T-cell (primary cell): ENCODE measurements at regions of chr11 and their contacts with region 1.

Region 1: GRCh38 chr11:27485930-27486773 is 13.6 kb upstream of the LGR4 start:
- DNase-seq: peak in 11 of 35 experiments; percentile 11 to 73 (median 26)
- ATAC-seq: peak in 2 of 4 experiments; percentile 46 to 51
- H3K4me3 ChIP-seq: no peak overlapping the region
- H3K4me3 Mint-ChIP-seq: no peak overlapping the region
- H3K27ac ChIP-seq: no peak overlapping the region
- H3K27ac Mint-ChIP-seq: no peak overlapping the region
- H3K4me1 ChIP-seq: no peaks in the 10 kb centered on the region
- H3K4me1 Mint-ChIP-seq: no peaks in the 10 kb centered on the region
- H3K27me3 ChIP-seq: no peaks in the 10 kb centered on the region
- H3K27me3 Mint-ChIP-seq: no peaks in the 10 kb centered on the region

Region 2: DNA sequence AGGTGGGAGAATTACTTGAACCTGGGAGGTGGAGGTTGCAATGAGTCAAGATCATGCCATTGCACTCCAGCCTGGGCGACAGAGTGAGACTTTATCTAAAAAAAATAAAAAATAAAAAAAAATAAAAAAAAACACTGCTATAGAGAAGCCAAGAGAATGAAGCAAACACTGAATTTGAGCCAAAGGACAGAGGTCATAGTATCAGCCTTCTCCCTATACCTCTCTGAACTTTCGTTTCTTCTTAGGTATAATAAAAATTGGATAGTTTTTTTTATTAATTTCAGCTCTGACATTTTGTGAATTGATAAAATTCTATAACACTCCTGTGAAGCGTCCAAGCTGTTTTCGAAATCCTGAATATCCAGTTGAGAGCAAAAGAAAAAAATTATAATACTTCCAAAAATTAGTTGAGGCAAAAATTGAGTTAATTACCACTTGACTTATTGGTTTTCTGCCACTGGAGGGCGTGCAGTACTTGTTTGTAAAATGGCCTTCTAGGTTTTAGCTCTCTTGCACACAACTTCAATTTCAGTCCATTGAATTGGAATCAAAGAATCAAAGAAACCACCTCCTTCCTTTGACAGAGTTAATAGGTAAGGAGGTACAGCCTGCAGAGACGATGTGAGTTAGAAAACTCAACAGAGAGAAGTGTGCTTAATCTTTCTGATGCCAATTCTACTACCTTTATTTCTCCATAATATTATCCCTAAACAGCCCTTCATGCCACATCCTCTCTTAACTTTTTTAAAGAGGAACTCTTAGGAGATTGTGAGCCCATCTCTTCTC is 302.3 kb before region 1 on chr11:
- CTCF ChIA-PET with region 1: interaction called, 4 to 34 read pairs
- POLR2A ChIA-PET with region 1: no interaction called
- DNase-seq: peak in 28 of 35 experiments; percentile 1 to 60 (median 17)
- ATAC-seq: peak in 1 of 4 experiments; percentile 32
- H3K4me3 ChIP-seq: no peak overlapping the region
- H3K4me3 Mint-ChIP-seq: no peak overlapping the region
- H3K27ac ChIP-seq: no peak overlapping the region
- H3K27ac Mint-ChIP-seq: no peak overlapping the region
- H3K4me1 ChIP-seq: no peaks in the 10 kb centered on the region
- H3K4me1 Mint-ChIP-seq: no peaks in the 10 kb centered on the region
- H3K27me3 ChIP-seq: no peaks in the 10 kb centered on the region
- H3K27me3 Mint-ChIP-seq: peaks cover 16% of the 10 kb centered on the region in 2 donors

Region 3: DNA sequence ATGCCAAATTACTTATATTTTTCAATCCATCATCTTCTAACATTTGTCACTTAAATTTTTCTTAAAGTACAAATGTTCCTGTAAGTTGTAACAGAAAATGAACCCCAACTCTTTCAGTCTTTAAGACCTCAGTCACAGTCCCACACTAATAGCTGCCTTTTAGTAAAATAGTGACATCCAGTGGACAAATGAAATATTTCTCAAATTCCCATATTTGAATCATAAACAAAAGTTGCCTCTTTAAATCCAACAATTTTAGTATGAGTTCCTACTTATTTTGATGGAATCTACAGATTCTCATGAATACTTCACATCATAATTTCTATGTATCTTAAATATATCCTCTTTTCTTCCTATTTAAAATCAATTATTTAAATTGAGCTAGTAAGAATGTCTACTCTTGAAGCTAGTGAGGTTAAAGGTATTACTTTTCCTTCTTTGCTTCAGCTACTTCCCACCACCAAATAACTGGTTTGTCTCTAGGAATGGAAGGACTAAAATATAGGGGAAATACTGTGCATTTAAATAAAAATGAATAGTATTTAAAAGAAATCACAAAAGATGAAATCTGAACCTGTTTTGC is 11.2 kb after region 1 on chr11:
- CTCF ChIA-PET with region 1: interaction called, 45 to 82 read pairs
- POLR2A ChIA-PET with region 1: no interaction called
- DNase-seq: peak in 1 of 35 experiments; percentile 41
- ATAC-seq: peak in 1 of 4 experiments; percentile 41
- H3K4me3 ChIP-seq: no peak overlapping the region
- H3K4me3 Mint-ChIP-seq: no peak overlapping the region
- H3K27ac ChIP-seq: no peak overlapping the region
- H3K27ac Mint-ChIP-seq: no peak overlapping the region
- H3K4me1 ChIP-seq: peaks cover 0 to 2% of the 10 kb centered on the region in 2 experiments
- H3K4me1 Mint-ChIP-seq: peaks cover 23 to 36% (median 30%) of the 10 kb centered on the region in 3 donors
- H3K27me3 ChIP-seq: no peaks in the 10 kb centered on the region
- H3K27me3 Mint-ChIP-seq: no peaks in the 10 kb centered on the region